ENCODE measurements at regions of chr5 and their contacts with region 1.

Region 1: DNA sequence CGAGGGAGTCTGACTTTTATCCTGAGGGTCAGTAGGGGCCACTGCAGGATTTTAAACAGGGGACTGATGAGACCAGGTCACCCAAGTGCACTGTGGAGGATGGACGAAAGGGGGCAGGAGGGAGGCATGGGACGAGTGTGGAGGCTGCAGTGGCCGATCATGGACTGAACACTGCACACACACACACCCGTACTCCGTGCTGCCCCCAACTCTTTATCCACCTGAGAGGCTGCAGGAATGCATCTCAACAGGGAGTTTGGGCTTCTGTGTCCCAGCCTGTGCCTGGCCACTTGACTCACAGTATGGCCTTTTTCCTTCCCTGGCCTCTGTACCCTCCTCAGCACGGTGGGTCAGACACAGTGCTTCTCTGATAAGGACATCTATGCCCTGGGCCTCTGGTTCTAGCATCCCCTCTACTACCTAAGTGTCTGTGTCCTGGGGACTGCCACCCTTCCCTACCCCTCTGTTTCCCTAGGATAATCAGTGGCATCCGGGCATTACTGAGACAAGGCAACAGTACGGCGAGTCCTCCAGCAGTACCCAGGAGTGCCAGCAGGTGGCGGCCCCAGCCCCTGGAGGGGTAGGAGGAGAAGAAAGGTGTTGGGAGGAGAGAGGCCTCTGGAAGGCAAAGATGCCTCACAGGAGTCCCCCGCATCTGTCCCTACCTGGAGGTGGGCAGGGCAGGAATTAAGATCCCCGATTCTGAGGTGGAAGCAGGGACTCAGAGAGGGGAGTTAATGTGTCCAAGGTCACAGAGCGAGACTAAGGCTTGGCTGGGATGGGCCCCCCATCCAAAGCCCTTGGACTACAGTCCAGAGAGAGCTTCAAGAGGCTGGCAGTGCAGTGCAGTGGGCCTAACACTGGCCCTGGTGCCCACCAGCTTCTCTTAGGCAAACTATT is 5.1 kb upstream of the CDX1 start:
- DNase-seq: peak; percentile 92
- ATAC-seq: peak; percentile 61

Region 2: GRCh38 chr5:150092159-150092787 is 69.2 kb before region 1 on chr5:
- intact Hi-C with region 1: no loop called
- DNase-seq: no peak
- ATAC-seq: no peak

Region 3: GRCh38 chr5:150217873-150218692 is 56.6 kb after region 1 on chr5:
- intact Hi-C with region 1: loop called (anchors 5 kb)
- DNase-seq: peak; percentile 85
- ATAC-seq: peak; percentile 86